Right ventricle myocardium inferior (tissue), 1 donor: ENCODE measurements at regions of chr15 and their contacts with region 1.

Region 1: GRCh38 chr15:99273801-99274200 is 22.5 kb downstream of the LRRC28 start:
- DNase-seq: no peak
- ATAC-seq: no peak

Region 2: DNA sequence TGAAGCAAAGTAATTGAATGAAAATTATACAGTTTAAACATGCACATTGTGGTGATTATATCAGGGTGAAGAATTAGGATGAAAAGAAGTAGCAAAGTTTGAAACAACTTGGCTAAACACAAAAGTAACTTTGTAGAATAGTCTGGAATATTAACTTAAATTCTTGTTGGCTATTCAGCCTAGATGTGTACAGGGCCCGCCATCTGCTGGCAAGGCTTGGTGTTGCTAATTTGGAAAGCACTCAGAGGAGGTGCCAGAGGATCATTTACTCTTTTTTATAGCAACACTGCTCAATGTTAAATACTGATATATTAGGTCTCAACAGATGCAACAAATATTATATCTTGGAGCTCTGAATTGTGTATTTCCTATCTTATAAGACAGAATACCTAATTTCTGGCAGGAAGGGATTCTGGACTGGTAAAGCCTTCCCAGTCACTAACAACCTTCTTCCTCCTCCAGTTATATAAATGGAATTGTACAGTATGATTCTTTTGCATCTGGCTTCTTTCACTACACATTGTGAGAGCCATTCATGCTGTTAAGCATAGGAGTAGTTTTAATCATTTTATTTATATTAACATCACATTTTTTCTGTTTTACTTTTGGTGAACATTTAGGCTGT is 60.5 kb before region 1 on chr15:
- intact Hi-C with region 1: no loop called
- DNase-seq: peak; percentile 89
- ATAC-seq: peak; percentile 74

Region 3: GRCh38 chr15:99326235-99326634 is 52.4 kb after region 1 on chr15:
- intact Hi-C with region 1: no loop called
- DNase-seq: no peak
- ATAC-seq: no peak

Region 4: DNA sequence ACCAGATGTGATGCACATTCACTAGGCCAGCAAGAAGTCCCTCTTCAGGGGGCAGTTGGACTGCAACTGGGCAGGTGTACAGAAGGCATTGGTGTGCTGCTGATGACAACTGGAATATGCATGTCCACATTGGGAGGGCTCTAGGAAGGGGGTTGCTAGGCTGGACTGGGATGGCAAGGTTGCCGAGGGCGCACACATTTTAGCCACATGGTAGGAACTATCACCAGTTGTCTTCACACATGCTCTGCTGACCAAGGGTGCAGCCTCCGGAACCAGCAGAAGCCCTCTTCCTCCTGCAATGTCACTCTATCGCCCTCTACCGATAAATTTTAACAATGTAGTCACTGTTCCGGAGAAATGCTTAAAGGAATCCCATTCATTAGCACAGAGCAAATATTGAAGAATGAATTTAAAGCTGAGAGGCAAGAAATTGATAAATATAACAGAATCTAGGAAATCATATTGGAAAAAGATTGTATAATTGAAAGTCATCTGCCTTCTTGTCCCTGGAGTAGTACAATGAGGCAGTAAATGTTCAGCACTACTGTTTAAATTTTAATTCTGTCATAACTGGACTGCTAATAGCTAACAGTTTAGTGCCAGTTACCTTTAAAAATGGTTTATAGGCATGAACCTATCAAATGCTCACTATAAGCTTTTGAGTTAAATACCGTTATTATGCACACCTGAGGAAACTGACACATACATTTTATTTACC is 482.1 kb after region 1 on chr15:
- intact Hi-C with region 1: loop called (anchors 2 kb)
- DNase-seq: no peak
- ATAC-seq: peak; percentile 86